Ascending aorta (tissue), 2 donors: ENCODE measurements at regions of chr3 and their contacts with region 1.

Region 1: DNA sequence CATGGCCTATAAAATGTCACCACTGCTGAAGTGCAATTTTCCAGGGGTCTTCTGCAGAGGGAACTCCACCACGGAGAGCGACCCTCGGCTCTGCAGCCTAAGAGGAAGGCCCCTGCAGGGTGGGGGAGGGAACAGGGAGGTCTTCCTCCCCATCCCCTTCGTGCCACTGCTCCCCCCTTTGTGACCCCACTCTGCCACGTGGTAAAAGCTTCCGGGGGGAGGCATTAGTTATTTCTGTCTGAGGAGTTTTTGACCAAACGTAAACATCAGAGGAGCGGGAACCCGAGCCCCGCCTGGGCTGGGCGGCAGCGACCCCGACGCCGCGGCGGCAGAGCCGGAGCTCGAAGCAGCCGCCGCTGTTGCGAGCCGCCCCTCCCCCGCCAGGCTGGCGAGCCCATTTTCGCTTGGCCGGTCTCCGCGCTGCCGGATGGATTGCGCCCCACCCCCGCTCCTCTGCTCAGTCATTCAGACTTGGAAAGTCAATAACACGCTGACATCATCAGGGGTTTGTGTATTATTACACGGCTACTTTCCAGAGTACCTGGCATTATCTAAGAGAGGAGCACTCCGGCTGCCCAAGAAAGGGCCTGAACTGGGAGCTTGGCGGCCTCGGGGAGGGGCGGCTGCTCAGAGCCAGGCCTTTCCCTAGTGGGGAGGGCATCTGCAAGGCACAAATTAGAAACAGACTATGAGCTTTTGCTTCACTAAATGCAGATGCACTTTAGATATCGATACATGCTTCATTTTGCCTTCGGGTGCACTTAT is 162.5 kb upstream of the TBL1XR1 start:
- DNase-seq: peak; percentile 79 to 97
- H3K4me3 ChIP-seq: peak overlapping the region; percentile 29 to 59
- H3K27ac ChIP-seq: peak overlapping the region; percentile 88 to 90
- H3K4me1 ChIP-seq: peaks cover 20 to 49% of the 10 kb centered on the region in 2 donors
- H3K27me3 ChIP-seq: no peaks in the 10 kb centered on the region
- CTCF ChIP-seq: no peak

Region 2: GRCh38 chr3:177050501-177051237 is 309.1 kb before region 1 on chr3:
- intact Hi-C with region 1: loop called (anchors 5 kb)
- DNase-seq: no peak
- H3K4me3 ChIP-seq: no peak overlapping the region
- H3K27ac ChIP-seq: no peak overlapping the region
- H3K4me1 ChIP-seq: peaks cover 0 to 8% of the 10 kb centered on the region in 2 donors
- H3K27me3 ChIP-seq: no peaks in the 10 kb centered on the region
- CTCF ChIP-seq: peak; percentile 56 to 60 (median 59)

Region 3: DNA sequence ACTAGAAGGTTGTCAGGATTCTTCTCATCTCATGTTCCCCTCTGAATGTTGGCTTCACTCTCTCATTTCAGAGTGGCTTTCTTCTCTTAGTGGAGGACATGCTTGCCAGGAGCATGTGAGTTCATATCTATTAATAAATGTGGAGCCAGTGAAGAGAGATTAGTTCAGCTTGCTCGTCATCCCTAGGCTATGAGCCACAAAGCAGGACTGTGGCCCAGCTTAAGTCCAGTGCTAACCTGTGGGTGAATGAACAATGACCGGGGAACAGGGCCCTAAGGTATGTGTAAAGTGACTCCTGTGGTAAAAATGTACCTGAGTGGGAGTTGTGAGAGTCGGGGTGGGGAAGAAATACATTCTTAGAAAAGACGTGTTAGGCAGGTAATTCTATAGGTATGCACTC is 65.6 kb before region 1 on chr3:
- intact Hi-C with region 1: loop called (anchors 2 kb)
- DNase-seq: peak; percentile 29 to 89
- H3K4me3 ChIP-seq: no peak overlapping the region
- H3K27ac ChIP-seq: peak overlapping the region; percentile 80 to 84
- H3K4me1 ChIP-seq: peaks cover 3 to 11% of the 10 kb centered on the region in 2 donors
- H3K27me3 ChIP-seq: no peaks in the 10 kb centered on the region
- CTCF ChIP-seq: no peak

Region 4: GRCh38 chr3:177333533-177334520 is 25.9 kb before region 1 on chr3:
- intact Hi-C with region 1: no loop called
- DNase-seq: peak in 1 of 2 donors; percentile 72
- H3K4me3 ChIP-seq: no peak overlapping the region
- H3K27ac ChIP-seq: peak overlapping the region; percentile 32 to 58
- H3K4me1 ChIP-seq: peaks cover 0 to 40% of the 10 kb centered on the region in 2 donors
- H3K27me3 ChIP-seq: no peaks in the 10 kb centered on the region
- CTCF ChIP-seq: no peak

Region 5: DNA sequence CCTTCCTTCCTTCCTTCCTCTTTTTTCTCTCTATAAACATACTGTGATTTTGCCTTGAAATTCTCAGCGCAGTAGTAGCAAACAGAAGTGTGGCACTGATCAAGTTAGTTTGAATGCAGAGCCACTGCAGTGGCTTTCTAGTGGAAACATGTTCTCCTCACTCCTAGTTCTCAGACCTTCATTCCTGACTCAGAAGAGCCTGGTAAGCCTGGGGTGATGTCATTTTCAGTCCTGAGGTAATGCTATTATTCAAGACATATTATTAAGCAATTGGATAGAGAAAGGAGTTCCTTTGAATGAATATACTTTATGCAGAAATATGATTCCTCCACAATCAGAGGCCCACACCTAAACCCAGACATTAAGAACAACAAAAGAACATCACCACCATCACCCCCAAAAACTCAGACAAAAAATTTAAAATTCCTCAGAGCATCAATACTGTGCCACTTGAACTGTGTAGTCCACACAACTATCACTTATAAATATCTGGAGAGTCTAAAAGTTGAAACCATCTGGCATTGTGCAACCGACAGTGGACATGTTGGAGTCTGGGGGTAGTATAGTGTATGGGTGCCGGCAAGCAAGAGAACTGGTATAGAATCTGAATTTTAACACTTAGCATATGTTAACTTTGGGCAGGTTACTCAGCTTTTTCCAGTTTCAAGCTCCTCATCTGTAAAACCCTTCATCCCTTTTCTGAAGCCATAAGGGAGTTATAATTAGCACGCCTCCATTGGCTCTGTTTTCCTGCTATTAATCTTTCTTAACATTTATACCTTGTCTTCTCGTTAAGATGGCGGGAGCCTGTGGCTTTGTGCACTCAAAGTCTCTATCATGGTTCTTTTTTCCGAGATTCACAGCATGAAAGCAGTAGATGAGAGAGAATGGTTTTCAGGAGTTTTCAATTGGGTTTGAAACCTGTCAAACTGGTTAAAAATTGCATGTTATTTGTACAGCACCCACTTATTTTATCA is 93.0 kb after region 1 on chr3:
- intact Hi-C with region 1: loop called (anchors 5 kb)
- DNase-seq: no peak
- H3K4me3 ChIP-seq: no peak overlapping the region
- H3K27ac ChIP-seq: peak overlapping the region in 1 of 2 donors; percentile 15
- H3K4me1 ChIP-seq: peaks cover 0 to 4% of the 10 kb centered on the region in 2 donors
- H3K27me3 ChIP-seq: no peaks in the 10 kb centered on the region
- CTCF ChIP-seq: no peak

Region 6: GRCh38 chr3:177468331-177468730 is 108.6 kb after region 1 on chr3:
- intact Hi-C with region 1: no loop called
- DNase-seq: peak in 1 of 2 donors; percentile 70
- H3K4me3 ChIP-seq: no peak overlapping the region
- H3K27ac ChIP-seq: no peak overlapping the region
- H3K4me1 ChIP-seq: peaks cover 0 to 6% of the 10 kb centered on the region in 2 donors
- H3K27me3 ChIP-seq: no peaks in the 10 kb centered on the region
- CTCF ChIP-seq: no peak

Region 7: GRCh38 chr3:177827511-177828207 is 467.9 kb after region 1 on chr3:
- intact Hi-C with region 1: loop called (anchors 5 kb)
- DNase-seq: no peak
- H3K4me3 ChIP-seq: no peak overlapping the region
- H3K27ac ChIP-seq: peak overlapping the region in 1 of 2 donors; percentile 30
- H3K4me1 ChIP-seq: peaks cover 10 to 28% of the 10 kb centered on the region in 2 donors
- H3K27me3 ChIP-seq: no peaks in the 10 kb centered on the region
- CTCF ChIP-seq: no peak

Region 8: GRCh38 chr3:178325330-178325729 is 965.6 kb after region 1 on chr3:
- intact Hi-C with region 1: loop called (anchors 5 kb)
- DNase-seq: no peak
- H3K4me3 ChIP-seq: no peak overlapping the region
- H3K27ac ChIP-seq: no peak overlapping the region
- H3K4me1 ChIP-seq: peaks cover 0 to 15% of the 10 kb centered on the region in 2 donors
- H3K27me3 ChIP-seq: no peaks in the 10 kb centered on the region
- CTCF ChIP-seq: peak in 2 of 3 experiments; percentile 47 to 54

Region 9: GRCh38 chr3:178385280-178385952 is 1025.6 kb after region 1 on chr3:
- intact Hi-C with region 1: loop called (anchors 5 kb)
- DNase-seq: no peak
- H3K4me3 ChIP-seq: no peak overlapping the region
- H3K27ac ChIP-seq: peak overlapping the region in 1 of 2 donors; percentile 43
- H3K4me1 ChIP-seq: peaks cover 3 to 17% of the 10 kb centered on the region in 2 donors
- H3K27me3 ChIP-seq: no peaks in the 10 kb centered on the region
- CTCF ChIP-seq: peak; percentile 75 to 87 (median 82)